ENCODE measurements at regions of chr16 and their contacts with region 1.

Region 1: DNA sequence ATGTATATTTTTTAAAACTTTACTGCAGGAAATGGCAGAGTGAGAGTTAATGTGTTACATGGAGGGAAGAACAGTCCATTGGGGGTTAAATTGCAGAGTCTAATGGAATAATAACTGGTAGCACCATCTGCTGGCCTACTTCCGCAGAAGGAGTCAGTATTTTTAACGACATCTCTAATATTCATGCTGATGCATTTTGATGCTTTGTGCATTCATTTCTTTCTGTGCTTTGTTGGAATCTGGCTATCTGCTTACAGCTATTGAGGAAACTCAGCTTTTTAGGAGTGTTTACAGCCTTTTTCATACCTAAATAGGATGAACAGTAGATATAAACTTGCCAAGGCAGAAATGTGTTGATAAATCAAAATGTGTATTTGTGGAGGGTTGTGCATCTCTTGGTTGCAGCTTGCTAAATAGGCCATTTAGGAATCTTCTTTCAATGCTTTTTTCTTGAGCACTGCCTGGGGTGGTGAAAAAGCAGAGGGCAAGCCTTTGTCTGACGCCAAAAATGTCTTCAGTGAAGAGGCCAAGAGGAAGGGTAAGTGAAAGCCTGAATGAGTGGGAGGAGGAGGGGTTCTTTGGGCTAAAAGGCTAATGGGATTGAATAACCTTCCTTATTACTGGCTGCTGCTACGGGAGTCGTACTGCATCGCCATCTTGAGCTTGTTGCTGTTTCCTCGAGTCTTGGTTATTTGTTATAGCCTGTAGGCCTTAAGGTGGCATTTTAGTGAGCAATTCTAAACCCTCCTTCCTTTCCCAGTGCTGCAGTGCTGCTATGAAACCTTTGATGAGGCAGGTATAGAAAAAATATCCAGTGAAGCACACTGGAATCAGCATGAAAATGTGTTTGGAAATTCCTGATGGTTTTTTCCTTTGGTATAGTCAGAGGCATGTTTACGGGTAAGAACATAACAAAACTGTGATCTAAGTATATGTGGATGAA is 153.3 kb downstream of the CHD9 start:
- DNase-seq: peak; percentile 90
- H3K4me3 Mint-ChIP-seq: peak overlapping the region; percentile 80
- H3K27ac Mint-ChIP-seq: peak overlapping the region; percentile 76
- H3K4me1 Mint-ChIP-seq: peaks cover 23% of the 10 kb centered on the region
- H3K27me3 Mint-ChIP-seq: no peaks in the 10 kb centered on the region
- CTCF ChIP-seq: peak; percentile 57

Region 2: GRCh38 chr16:53099318-53100130 is 108.6 kb before region 1 on chr16:
- CTCF ChIA-PET with region 1: interaction called, 9 read pairs
- POLR2A ChIA-PET with region 1: interaction called, 28 read pairs
- intact Hi-C with region 1: no loop called
- DNase-seq: peak; percentile 97
- H3K4me3 Mint-ChIP-seq: peak overlapping the region; percentile 68
- H3K27ac Mint-ChIP-seq: peak overlapping the region; percentile 96
- H3K4me1 Mint-ChIP-seq: peaks cover 30% of the 10 kb centered on the region
- H3K27me3 Mint-ChIP-seq: no peaks in the 10 kb centered on the region
- CTCF ChIP-seq: no peak

Region 3: DNA sequence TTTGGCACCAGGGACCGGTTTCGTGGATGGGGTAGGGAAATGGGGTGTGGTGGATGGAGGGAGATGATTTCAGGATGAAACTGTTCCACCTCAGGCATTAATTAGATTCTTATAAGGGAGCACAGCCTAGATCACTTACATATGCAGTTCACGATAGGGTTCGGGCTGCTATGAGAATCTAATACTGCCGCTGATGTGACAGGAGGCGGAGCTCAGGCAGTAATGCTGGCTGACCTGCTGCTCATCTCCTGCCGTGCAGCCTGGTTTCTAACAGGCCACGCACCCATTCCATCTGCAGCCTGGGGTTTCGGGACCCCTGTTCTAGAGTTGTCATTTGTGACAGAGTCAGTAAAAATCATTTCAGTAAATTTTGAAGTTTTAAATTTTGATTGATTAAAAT is 53.6 kb before region 1 on chr16:
- CTCF ChIA-PET with region 1: interaction called, 12 read pairs
- POLR2A ChIA-PET with region 1: interaction called, 4 read pairs
- intact Hi-C with region 1: no loop called
- DNase-seq: no peak
- H3K4me3 Mint-ChIP-seq: no peak overlapping the region
- H3K27ac Mint-ChIP-seq: no peak overlapping the region
- H3K4me1 Mint-ChIP-seq: no peaks in the 10 kb centered on the region
- H3K27me3 Mint-ChIP-seq: no peaks in the 10 kb centered on the region
- CTCF ChIP-seq: no peak

Region 4: DNA sequence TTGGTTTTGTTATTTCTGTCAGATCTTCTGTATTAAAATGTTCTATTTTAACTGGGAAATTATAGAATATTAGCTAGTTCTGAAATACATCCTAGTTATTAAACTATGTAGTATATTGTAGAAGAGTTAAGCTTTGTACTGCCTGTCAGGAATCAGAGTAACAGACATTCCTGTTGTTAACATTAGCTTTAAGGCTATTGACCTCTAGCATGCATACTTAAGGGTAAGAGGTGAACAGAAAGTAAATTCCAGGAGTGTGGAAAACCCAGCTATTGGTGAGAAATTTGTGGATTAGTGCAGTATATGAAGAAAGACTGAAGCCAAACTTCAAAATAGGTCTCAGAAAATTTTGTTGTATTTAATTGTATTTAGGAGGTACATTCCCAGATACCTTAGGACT is 42.0 kb before region 1 on chr16:
- CTCF ChIA-PET with region 1: interaction called, 8 read pairs
- POLR2A ChIA-PET with region 1: interaction called, 17 read pairs
- intact Hi-C with region 1: loop called (anchors 5 kb)
- DNase-seq: no peak
- H3K4me3 Mint-ChIP-seq: no peak overlapping the region
- H3K27ac Mint-ChIP-seq: peak overlapping the region; percentile 19
- H3K4me1 Mint-ChIP-seq: peaks cover 16% of the 10 kb centered on the region
- H3K27me3 Mint-ChIP-seq: no peaks in the 10 kb centered on the region
- CTCF ChIP-seq: no peak

Region 5: DNA sequence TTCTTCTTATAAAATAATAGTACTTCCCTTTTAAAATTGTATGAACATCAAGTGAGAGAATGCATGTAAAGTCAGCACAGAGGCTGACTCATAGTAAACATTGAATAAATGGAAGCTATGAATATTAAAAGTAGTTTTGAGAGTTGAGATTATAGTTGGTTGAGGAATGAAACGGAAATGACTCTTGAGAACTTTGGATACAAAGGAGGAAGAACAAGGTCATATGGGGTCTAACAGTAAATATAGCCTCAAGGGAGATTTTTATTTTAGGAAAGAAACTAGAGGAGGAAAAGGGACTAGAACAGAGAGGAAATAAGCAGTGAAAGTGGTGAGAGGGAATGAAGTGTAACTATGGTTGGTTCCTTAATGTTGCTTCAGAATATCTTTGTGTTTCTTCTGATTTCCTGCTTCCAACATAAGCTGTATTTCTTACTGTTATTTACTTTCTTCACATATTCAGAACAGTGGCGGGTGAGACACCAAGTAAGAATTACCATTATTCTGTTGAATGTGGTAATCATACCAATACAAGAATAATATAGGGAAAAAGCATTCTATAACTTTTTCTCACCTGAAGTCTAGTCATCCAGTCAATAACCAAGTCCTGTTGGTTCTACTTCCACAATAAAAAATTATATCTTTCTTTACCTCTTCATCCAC is 11.8 kb after region 1 on chr16:
- CTCF ChIA-PET with region 1: no interaction called
- POLR2A ChIA-PET with region 1: interaction called, 18 read pairs
- intact Hi-C with region 1: no loop called
- DNase-seq: no peak
- H3K4me3 Mint-ChIP-seq: no peak overlapping the region
- H3K27ac Mint-ChIP-seq: no peak overlapping the region
- H3K4me1 Mint-ChIP-seq: peaks cover 5% of the 10 kb centered on the region
- H3K27me3 Mint-ChIP-seq: no peaks in the 10 kb centered on the region
- CTCF ChIP-seq: no peak

Region 6: GRCh38 chr16:53415504-53415903 is 207.4 kb after region 1 on chr16:
- CTCF ChIA-PET with region 1: no interaction called
- POLR2A ChIA-PET with region 1: no interaction called
- intact Hi-C with region 1: no loop called
- DNase-seq: peak; percentile 29
- H3K4me3 Mint-ChIP-seq: no peak overlapping the region
- H3K27ac Mint-ChIP-seq: no peak overlapping the region
- H3K4me1 Mint-ChIP-seq: peaks cover 14% of the 10 kb centered on the region
- H3K27me3 Mint-ChIP-seq: no peaks in the 10 kb centered on the region
- CTCF ChIP-seq: no peak